ENCODE measurements at regions of chr10 and their contacts with region 1.

Region 1: GRCh38 chr10:28393966-28394568 is 91.2 kb upstream of the MPP7 start:
- DNase-seq: peak; percentile 55 to 61 (median 58)
- H3K4me3 ChIP-seq: no peak overlapping the region
- H3K4me3 Mint-ChIP-seq: peak overlapping the region in 2 of 8 donors; percentile 2 to 18
- H3K27ac ChIP-seq: no peak overlapping the region
- H3K27ac Mint-ChIP-seq: peak overlapping the region in 1 of 7 donors; percentile 67
- H3K4me1 ChIP-seq: no peaks in the 10 kb centered on the region
- H3K4me1 Mint-ChIP-seq: peaks cover 4 to 7% (median 5%) of the 10 kb centered on the region in 4 donors
- H3K27me3 ChIP-seq: no peaks in the 10 kb centered on the region
- H3K27me3 Mint-ChIP-seq: peaks cover 3 to 7% of the 10 kb centered on the region in 2 donors

Region 2: GRCh38 chr10:27558612-27559020 is 835.5 kb before region 1 on chr10:
- CTCF ChIA-PET with region 1: interaction called, 3 read pairs
- POLR2A ChIA-PET with region 1: no interaction called
- intact Hi-C with region 1: loop called (anchors 5 kb)
- DNase-seq: peak in 3 of 5 donors; percentile 19 to 38 (median 31)
- H3K4me3 ChIP-seq: no peak overlapping the region
- H3K4me3 Mint-ChIP-seq: no peak overlapping the region
- H3K27ac ChIP-seq: no peak overlapping the region
- H3K27ac Mint-ChIP-seq: no peak overlapping the region
- H3K4me1 ChIP-seq: no peaks in the 10 kb centered on the region
- H3K4me1 Mint-ChIP-seq: peaks cover 0 to 7% (median under 1%) of the 10 kb centered on the region in 4 donors
- H3K27me3 ChIP-seq: no peaks in the 10 kb centered on the region
- H3K27me3 Mint-ChIP-seq: no peaks in the 10 kb centered on the region

Region 3: DNA sequence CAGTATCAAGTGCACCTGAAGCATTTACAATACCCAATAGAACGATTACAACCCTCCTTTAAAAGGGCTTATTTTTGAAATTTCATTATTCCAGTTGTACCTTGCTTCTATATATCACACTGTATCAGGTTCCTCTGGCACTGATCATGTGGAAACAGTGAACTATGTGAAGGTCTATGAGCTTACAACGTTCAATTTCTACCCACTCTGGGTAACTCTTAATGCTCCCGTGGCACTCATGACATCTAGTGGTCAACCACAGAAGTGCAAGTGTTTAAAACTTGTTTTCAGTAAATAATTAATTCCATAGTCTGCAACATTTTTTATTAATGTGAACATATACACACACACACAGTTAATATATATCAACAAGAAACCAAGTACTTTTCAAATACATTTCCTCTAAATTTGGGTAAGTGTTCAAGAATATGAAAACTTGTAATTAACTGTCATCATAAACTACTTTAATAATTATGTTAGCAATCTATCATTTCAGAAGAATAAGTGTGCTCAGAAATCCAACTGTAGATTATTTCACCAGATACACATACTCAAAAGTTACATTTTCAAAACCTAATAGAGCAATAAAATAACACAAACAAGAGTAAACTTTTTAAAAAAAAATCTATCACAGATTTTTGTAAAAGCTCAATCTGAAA is 152.2 kb before region 1 on chr10:
- CTCF ChIA-PET with region 1: interaction called, 22 read pairs
- POLR2A ChIA-PET with region 1: no interaction called
- intact Hi-C with region 1: no loop called
- DNase-seq: peak in 4 of 5 donors; percentile 36 to 49 (median 42)
- H3K4me3 ChIP-seq: no peak overlapping the region
- H3K4me3 Mint-ChIP-seq: no peak overlapping the region
- H3K27ac ChIP-seq: no peak overlapping the region
- H3K27ac Mint-ChIP-seq: no peak overlapping the region
- H3K4me1 ChIP-seq: peaks cover 14% of the 10 kb centered on the region
- H3K4me1 Mint-ChIP-seq: peaks cover 13 to 20% (median 17%) of the 10 kb centered on the region in 4 donors
- H3K27me3 ChIP-seq: no peaks in the 10 kb centered on the region
- H3K27me3 Mint-ChIP-seq: no peaks in the 10 kb centered on the region

Region 4: DNA sequence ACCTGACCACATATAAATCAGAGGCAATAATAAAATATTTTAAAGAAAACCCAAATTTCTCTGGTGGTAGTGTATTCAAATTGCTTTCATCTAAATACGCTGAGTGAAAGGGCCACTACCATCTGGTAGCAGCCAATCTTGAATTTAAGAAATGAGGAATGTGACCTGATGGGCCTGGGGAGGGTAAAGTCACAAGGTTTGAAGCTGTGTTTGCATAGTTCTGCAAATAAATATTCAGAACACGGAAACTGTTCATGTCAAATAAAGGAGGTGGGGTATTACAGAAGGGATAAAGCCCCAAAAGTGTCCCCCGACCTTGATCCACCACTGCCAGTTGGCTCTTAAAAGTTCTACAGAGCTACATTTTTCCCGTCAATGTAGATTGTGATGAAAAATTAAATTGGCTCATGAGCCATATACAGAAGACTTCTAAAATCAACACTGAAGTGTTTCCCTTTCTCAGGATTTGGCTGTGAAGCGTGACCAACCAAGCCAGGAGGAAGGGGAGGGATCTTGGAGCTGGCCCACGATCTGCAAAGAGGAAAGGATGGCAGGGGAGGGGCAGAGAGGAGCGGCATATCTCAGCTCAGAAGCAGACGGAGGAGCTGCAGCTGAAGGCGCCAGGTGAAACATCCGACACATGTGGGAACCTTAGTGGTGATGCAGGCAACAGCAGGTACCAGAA is 130.8 kb before region 1 on chr10:
- CTCF ChIA-PET with region 1: interaction called, 15 read pairs
- POLR2A ChIA-PET with region 1: no interaction called
- intact Hi-C with region 1: no loop called
- DNase-seq: no peak
- H3K4me3 ChIP-seq: no peak overlapping the region
- H3K4me3 Mint-ChIP-seq: no peak overlapping the region
- H3K27ac ChIP-seq: no peak overlapping the region
- H3K27ac Mint-ChIP-seq: peak overlapping the region in 1 of 7 donors; percentile 77
- H3K4me1 ChIP-seq: peaks cover 10% of the 10 kb centered on the region
- H3K4me1 Mint-ChIP-seq: peaks cover 16 to 30% (median 18%) of the 10 kb centered on the region in 4 donors
- H3K27me3 ChIP-seq: no peaks in the 10 kb centered on the region
- H3K27me3 Mint-ChIP-seq: no peaks in the 10 kb centered on the region

Region 5: DNA sequence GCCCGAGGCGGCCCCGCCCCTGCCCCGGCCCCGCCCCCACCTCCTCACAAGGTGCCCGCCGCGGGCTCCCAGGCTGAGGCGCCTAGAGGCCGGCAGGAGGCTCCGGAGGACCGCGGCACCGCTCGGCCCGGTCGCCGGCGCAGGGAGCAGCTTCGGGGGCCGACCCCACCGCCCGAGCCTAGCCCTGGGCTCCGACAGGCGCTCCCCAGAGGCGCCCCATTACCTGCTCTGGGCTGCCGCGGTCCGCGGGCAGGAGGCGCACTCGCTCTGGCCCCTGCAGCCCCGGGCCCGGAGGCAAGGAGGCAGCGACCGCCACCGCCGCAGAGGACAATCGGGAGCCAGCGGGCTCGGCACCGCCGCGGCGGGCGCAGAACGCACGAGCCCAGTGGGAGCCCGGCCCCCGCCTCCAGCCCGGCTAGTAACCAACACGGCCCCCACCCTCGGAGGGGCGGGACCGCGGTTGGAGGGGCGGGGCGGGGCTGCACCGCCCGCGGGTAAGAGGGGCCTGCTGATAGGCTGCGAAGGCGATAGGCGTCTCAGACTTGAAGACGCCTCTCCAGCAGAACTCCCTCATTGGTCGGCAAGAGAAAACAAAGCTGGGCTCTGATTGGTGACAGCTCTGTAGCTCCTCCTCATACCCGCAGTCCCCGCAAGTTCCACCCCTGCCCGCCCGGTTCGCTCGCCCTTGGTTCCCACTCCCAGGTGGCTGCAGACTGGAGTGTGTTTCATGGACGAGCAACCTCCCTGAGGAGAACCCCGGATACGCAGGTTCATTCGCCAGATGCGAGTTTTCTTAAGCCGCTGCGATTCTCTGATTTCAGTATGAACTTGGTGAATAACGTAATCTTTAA is 91.2 kb before region 1 on chr10 and contains the start of gene MPP7:
- CTCF ChIA-PET with region 1: interaction called, 33 read pairs
- POLR2A ChIA-PET with region 1: interaction called, 3 read pairs
- intact Hi-C with region 1: no loop called
- DNase-seq: peak; percentile 96 to 98 (median 97)
- H3K4me3 ChIP-seq: peak within 1 kb of the TSS; percentile 82 to 93
- H3K4me3 Mint-ChIP-seq: peak within 1 kb of the TSS; percentile 88 to 97 (median 94)
- H3K27ac ChIP-seq: peak within 1 kb of the TSS; percentile 51
- H3K27ac Mint-ChIP-seq: peak within 1 kb of the TSS; percentile 87 to 95 (median 93)
- H3K4me1 ChIP-seq: peaks cover 48% of the 10 kb centered on the region
- H3K4me1 Mint-ChIP-seq: peaks cover 44 to 76% (median 57%) of the 10 kb centered on the region in 4 donors
- H3K27me3 ChIP-seq: no peaks in the 10 kb centered on the region
- H3K27me3 Mint-ChIP-seq: no peaks in the 10 kb centered on the region
- total RNA-seq, gene MPP7: 24.9 to 28.1 TPM

Region 6: DNA sequence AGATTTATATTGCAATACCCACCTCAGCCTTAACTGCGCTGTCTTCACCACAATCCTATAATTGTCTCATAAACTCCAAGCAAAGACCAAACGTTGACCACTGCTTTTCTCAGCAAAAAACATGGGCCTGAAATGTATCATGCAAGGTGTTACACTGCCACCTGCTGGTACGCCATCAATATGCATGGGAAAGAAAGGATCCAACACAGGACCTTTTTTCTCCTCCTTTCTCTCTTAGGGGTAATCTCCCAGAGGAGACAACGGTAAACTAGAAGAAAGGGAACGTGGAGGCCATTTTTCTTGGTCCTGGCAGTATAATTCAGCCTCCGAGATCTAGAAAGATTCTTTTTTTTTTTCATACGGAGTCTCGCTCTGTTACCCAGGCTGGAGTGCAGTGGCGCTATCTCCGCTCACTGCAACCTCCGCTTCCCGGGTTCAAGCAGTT is 12.1 kb before region 1 on chr10:
- CTCF ChIA-PET with region 1: interaction called, 52 read pairs
- POLR2A ChIA-PET with region 1: interaction called, 3 read pairs
- intact Hi-C with region 1: no loop called
- DNase-seq: peak; percentile 78 to 85 (median 82)
- H3K4me3 ChIP-seq: no peak overlapping the region
- H3K4me3 Mint-ChIP-seq: peak overlapping the region in 3 of 8 donors; percentile 42 to 63 (median 45)
- H3K27ac ChIP-seq: no peak overlapping the region
- H3K27ac Mint-ChIP-seq: peak overlapping the region in 5 of 7 donors; percentile 0 to 94 (median 68)
- H3K4me1 ChIP-seq: peaks cover 17% of the 10 kb centered on the region
- H3K4me1 Mint-ChIP-seq: peaks cover 18 to 25% (median 21%) of the 10 kb centered on the region in 4 donors
- H3K27me3 ChIP-seq: no peaks in the 10 kb centered on the region
- H3K27me3 Mint-ChIP-seq: peaks cover 4 to 5% of the 10 kb centered on the region in 2 donors

Region 7: GRCh38 chr10:28425422-28425821 is 31.4 kb after region 1 on chr10:
- CTCF ChIA-PET with region 1: interaction called, 10 read pairs
- POLR2A ChIA-PET with region 1: no interaction called
- intact Hi-C with region 1: no loop called
- DNase-seq: no peak
- H3K4me3 ChIP-seq: no peak overlapping the region
- H3K4me3 Mint-ChIP-seq: no peak overlapping the region
- H3K27ac ChIP-seq: no peak overlapping the region
- H3K27ac Mint-ChIP-seq: no peak overlapping the region
- H3K4me1 ChIP-seq: no peaks in the 10 kb centered on the region
- H3K4me1 Mint-ChIP-seq: peaks cover 0 to 3% (median under 1%) of the 10 kb centered on the region in 4 donors
- H3K27me3 ChIP-seq: no peaks in the 10 kb centered on the region
- H3K27me3 Mint-ChIP-seq: peaks cover 4 to 6% of the 10 kb centered on the region in 2 donors

Region 8: GRCh38 chr10:28444031-28444430 is 50.0 kb after region 1 on chr10:
- CTCF ChIA-PET with region 1: no interaction called
- POLR2A ChIA-PET with region 1: no interaction called
- intact Hi-C with region 1: no loop called
- DNase-seq: no peak
- H3K4me3 ChIP-seq: no peak overlapping the region
- H3K4me3 Mint-ChIP-seq: no peak overlapping the region
- H3K27ac ChIP-seq: no peak overlapping the region
- H3K27ac Mint-ChIP-seq: no peak overlapping the region
- H3K4me1 ChIP-seq: no peaks in the 10 kb centered on the region
- H3K4me1 Mint-ChIP-seq: no peaks in the 10 kb centered on the region
- H3K27me3 ChIP-seq: no peaks in the 10 kb centered on the region
- H3K27me3 Mint-ChIP-seq: peaks cover 4 to 10% of the 10 kb centered on the region in 2 donors

Region 9: DNA sequence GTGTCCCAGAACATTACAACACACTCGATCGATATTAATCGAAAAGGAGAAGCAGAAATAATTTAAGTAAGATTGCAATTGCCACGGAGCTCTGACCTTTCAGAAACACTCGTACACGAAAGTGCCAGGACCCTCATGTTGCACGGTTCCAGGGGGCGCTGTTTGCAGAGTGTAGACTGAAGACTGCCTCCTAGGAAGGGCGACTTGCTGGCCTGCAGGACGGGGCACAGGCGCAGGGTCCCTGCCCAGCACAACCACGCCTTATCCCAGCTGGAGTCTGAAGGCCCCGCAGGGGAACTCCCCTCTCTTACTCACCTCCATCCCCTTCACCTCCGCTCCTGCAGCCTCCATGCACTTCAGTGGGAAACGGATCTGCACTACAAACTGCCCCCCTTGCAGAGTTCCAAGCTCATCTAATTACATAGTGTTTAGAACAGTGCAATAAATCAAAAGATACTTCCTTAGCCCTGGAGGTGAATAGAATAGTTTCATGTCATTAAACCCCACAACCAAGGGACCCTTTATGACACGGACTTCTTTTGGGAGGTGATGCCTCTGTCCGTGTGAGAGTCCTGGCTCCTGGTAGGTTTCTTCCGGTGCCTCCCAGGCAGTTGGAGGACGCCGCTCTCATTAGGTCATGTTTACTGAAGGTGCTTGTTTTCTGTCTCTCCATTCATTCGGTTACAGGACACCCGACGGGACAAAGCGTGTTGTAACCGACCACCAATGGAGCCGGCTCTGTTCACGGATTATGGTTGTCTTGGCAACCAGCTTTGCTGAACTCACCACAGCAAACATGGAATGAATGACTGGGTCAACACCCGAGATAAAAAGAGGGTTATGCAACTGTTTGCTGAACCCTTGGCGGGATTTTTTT is 545.5 kb after region 1 on chr10:
- CTCF ChIA-PET with region 1: no interaction called
- POLR2A ChIA-PET with region 1: no interaction called
- intact Hi-C with region 1: no loop called
- DNase-seq: no peak
- H3K4me3 ChIP-seq: no peak overlapping the region
- H3K4me3 Mint-ChIP-seq: no peak overlapping the region
- H3K27ac ChIP-seq: no peak overlapping the region
- H3K27ac Mint-ChIP-seq: no peak overlapping the region
- H3K4me1 ChIP-seq: no peaks in the 10 kb centered on the region
- H3K4me1 Mint-ChIP-seq: no peaks in the 10 kb centered on the region
- H3K27me3 ChIP-seq: no peaks in the 10 kb centered on the region
- H3K27me3 Mint-ChIP-seq: peaks cover 0 to 3% of the 10 kb centered on the region in 2 donors